ENCODE measurements at regions of chr5 and their contacts with region 1.

Region 1: GRCh38 chr5:159905496-159905895 is 10.8 kb upstream of the ADRA1B start:
- DNase-seq: peak; percentile 60
- H3K4me3 ChIP-seq: no peak overlapping the region
- H3K27ac ChIP-seq: peak overlapping the region; percentile 43 to 70 (median 50)
- H3K4me1 ChIP-seq: peaks cover 0 to 31% (median 9%) of the 10 kb centered on the region in 4 donors
- H3K27me3 ChIP-seq: no peaks in the 10 kb centered on the region
- CTCF ChIP-seq: no peak
- EP300 ChIP-seq: no peak
- POLR2A ChIP-seq: no peak

Region 2: GRCh38 chr5:158145827-158146226 is 1759.7 kb before region 1 on chr5:
- in situ Hi-C with region 1: no loop called
- intact Hi-C with region 1: loop called (anchors 5 kb)
- DNase-seq: no peak
- H3K4me3 ChIP-seq: no peak overlapping the region
- H3K27ac ChIP-seq: no peak overlapping the region
- H3K4me1 ChIP-seq: no peaks in the 10 kb centered on the region
- H3K27me3 ChIP-seq: no peaks in the 10 kb centered on the region
- CTCF ChIP-seq: no peak
- EP300 ChIP-seq: no peak
- POLR2A ChIP-seq: no peak